ENCODE measurements at regions of chr13 and their contacts with region 1.

Region 1: GRCh38 chr13:110593430-110594130 is 21.8 kb upstream of the NAXD start:
- DNase-seq: no peak
- H3K4me3 ChIP-seq: no peak overlapping the region
- H3K27ac ChIP-seq: no peak overlapping the region
- H3K4me1 ChIP-seq: no peaks in the 10 kb centered on the region
- H3K27me3 ChIP-seq: no peaks in the 10 kb centered on the region
- CTCF ChIP-seq: peak; percentile 36 to 63 (median 55)

Region 2: GRCh38 chr13:110644892-110645521 is 51.4 kb after region 1 on chr13:
- intact Hi-C with region 1: loop called (anchors 5 kb)
- DNase-seq: peak; percentile 27 to 72
- H3K4me3 ChIP-seq: no peak overlapping the region
- H3K27ac ChIP-seq: no peak overlapping the region
- H3K4me1 ChIP-seq: peaks cover 0 to 4% of the 10 kb centered on the region in 2 donors
- H3K27me3 ChIP-seq: no peaks in the 10 kb centered on the region
- CTCF ChIP-seq: peak; percentile 4 to 45 (median 23)

Region 3: GRCh38 chr13:110819203-110820014 is 225.8 kb after region 1 on chr13:
- intact Hi-C with region 1: loop called (anchors 2 kb)
- DNase-seq: peak in 1 of 2 donors; percentile 88
- H3K4me3 ChIP-seq: no peak overlapping the region
- H3K27ac ChIP-seq: no peak overlapping the region
- H3K4me1 ChIP-seq: peaks cover 0 to 2% of the 10 kb centered on the region in 2 donors
- H3K27me3 ChIP-seq: no peaks in the 10 kb centered on the region
- CTCF ChIP-seq: peak; percentile 88 to 97 (median 97)